Activated CD4-positive, alpha-beta T cell treated with anti-CD3 and anti-CD28 coated beads for 36 hours (primary cell): ENCODE measurements at regions of chr12 and their contacts with region 1.

Region 1: DNA sequence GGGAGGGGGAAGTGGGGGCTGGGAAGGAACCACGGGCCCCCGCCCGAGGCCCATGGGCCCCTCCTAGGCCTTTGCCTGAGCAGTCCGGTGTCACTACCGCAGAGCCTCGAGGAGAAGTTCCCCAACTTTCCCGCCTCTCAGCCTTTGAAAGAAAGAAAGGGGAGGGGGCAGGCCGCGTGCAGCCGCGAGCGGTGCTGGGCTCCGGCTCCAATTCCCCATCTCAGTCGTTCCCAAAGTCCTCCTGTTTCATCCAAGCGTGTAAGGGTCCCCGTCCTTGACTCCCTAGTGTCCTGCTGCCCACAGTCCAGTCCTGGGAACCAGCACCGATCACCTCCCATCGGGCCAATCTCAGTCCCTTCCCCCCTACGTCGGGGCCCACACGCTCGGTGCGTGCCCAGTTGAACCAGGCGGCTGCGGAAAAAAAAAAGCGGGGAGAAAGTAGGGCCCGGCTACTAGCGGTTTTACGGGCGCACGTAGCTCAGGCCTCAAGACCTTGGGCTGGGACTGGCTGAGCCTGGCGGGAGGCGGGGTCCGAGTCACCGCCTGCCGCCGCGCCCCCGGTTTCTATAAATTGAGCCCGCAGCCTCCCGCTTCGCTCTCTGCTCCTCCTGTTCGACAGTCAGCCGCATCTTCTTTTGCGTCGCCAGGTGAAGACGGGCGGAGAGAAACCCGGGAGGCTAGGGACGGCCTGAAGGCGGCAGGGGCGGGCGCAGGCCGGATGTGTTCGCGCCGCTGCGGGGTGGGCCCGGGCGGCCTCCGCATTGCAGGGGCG is at the start of gene GAPDH:
- DNase-seq: peak; percentile 95
- ATAC-seq: peak; percentile 53
- H3K4me3 Mint-ChIP-seq: peak within 1 kb of the TSS; percentile 98
- H3K27ac Mint-ChIP-seq: peak within 1 kb of the TSS; percentile 100
- H3K4me1 Mint-ChIP-seq: peaks cover 37% of the 10 kb centered on the region
- H3K27me3 Mint-ChIP-seq: no peaks in the 10 kb centered on the region
- total RNA-seq, gene GAPDH: 7,289 to 9,770 TPM

Region 2: DNA sequence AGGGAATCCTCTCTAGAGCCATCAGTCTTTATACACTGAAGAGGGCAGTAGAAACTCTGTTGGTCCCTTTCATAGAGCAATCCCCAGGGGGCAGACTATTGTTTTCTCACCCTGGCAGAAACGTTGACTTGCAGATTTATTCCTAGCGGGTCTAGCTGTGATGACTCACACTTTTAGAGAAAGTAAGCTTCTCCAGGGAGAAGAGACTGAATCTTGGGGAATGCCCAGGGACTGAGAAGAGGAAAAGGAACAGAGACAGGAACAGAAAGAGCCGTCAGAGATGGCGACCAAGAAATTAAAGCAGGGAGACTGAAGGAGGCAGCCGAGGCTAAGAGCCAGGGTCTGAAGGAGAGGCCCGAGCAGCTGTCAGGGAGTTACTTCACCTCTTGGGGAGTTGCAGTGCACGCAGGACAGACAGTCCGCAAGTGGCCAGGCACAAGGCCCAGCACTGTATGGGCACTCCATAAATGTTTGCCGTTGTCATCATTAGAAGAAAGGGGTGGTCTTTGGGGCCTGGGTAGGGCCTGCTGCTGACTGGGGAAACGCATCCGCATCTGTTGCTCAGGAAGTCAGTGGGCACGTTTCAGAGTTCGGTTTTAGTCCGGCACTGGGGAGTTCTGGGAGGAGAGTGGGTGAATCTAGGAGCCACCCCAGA is 210.6 kb before region 1 on chr12:
- CTCF ChIA-PET with region 1: interaction called, 4 read pairs
- POLR2A ChIA-PET with region 1: no interaction called
- intact Hi-C with region 1: loop called in 1 of 2 experiments (anchors 5 kb)
- DNase-seq: peak; percentile 58
- ATAC-seq: peak; percentile 81
- H3K4me3 Mint-ChIP-seq: peak overlapping the region; percentile 24
- H3K27ac Mint-ChIP-seq: peak overlapping the region; percentile 89
- H3K4me1 Mint-ChIP-seq: peaks cover 32% of the 10 kb centered on the region
- H3K27me3 Mint-ChIP-seq: no peaks in the 10 kb centered on the region

Region 3: GRCh38 chr12:6423267-6424007 is 110.7 kb before region 1 on chr12:
- CTCF ChIA-PET with region 1: interaction called, 53 read pairs
- POLR2A ChIA-PET with region 1: interaction called, 7 read pairs
- intact Hi-C with region 1: loop called (anchors 1 kb)
- DNase-seq: peak; percentile 86
- ATAC-seq: peak; percentile 62
- H3K4me3 Mint-ChIP-seq: peak overlapping the region; percentile 39
- H3K27ac Mint-ChIP-seq: peak overlapping the region; percentile 87
- H3K4me1 Mint-ChIP-seq: peaks cover 47% of the 10 kb centered on the region
- H3K27me3 Mint-ChIP-seq: no peaks in the 10 kb centered on the region

Region 4: DNA sequence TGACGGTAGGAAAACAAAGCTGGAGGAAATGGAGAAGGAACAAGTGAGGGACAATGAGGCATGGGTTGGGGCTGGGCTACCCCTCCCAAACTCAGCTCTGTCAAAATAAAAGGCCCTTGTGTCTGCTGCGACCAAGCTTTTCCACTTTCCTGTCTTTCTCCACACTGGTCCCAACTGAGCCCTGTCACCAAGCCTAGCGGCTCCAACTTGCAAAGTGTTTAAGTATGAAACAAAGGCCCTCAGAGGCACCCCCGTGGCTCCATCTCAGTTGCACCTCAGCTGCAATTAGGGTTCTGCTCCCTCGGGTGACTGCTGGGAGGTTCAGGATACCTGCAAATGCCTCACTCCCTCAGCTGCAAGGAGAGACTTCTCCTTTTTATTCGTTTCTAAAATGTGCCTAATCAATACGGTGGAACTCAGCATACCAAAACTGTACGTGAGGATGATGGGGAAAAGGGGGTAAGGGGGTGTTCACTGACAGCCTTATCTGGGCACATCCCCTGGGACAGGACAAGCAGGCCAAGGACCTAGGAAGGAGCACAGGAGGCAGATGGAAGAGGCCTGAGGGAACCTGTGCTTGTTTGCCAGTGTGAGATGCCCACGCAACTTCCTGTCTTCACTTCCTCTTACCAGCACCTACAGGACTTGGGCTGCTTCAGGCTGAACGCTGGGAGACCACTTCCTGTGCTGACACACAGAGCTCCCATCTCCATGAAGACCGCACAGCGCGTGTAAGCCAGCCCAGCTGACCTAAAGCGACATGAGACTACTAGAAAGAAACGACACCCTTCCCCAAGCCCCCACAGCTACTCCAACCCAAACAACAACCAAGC is 72.5 kb before region 1 on chr12:
- CTCF ChIA-PET with region 1: interaction called, 15 read pairs
- POLR2A ChIA-PET with region 1: interaction called, 14 read pairs
- intact Hi-C with region 1: loop called in 1 of 2 experiments (anchors 2 kb)
- DNase-seq: peak; percentile 92
- ATAC-seq: peak; percentile 81
- H3K4me3 Mint-ChIP-seq: peak overlapping the region; percentile 75
- H3K27ac Mint-ChIP-seq: peak overlapping the region; percentile 100
- H3K4me1 Mint-ChIP-seq: peaks cover 86% of the 10 kb centered on the region
- H3K27me3 Mint-ChIP-seq: no peaks in the 10 kb centered on the region

Region 5: GRCh38 chr12:6493497-6494257 is 40.4 kb before region 1 on chr12 and contains the start of gene NCAPD2:
- CTCF ChIA-PET with region 1: interaction called, 5 read pairs
- POLR2A ChIA-PET with region 1: interaction called, 19 read pairs
- intact Hi-C with region 1: loop called (anchors 1 kb)
- DNase-seq: peak; percentile 98
- ATAC-seq: peak; percentile 89
- H3K4me3 Mint-ChIP-seq: peak within 1 kb of the TSS; percentile 94
- H3K27ac Mint-ChIP-seq: peak within 1 kb of the TSS; percentile 98
- H3K4me1 Mint-ChIP-seq: peaks cover 35% of the 10 kb centered on the region
- H3K27me3 Mint-ChIP-seq: no peaks in the 10 kb centered on the region
- total RNA-seq, gene NCAPD2: 199 to 210 TPM

Region 6: GRCh38 chr12:6768990-6769389 is 234.9 kb after region 1 on chr12:
- CTCF ChIA-PET with region 1: no interaction called
- POLR2A ChIA-PET with region 1: no interaction called
- intact Hi-C with region 1: no loop called
- DNase-seq: peak; percentile 54
- ATAC-seq: no peak
- H3K4me3 Mint-ChIP-seq: peak overlapping the region; percentile 73
- H3K27ac Mint-ChIP-seq: no peak overlapping the region
- H3K4me1 Mint-ChIP-seq: peaks cover 62% of the 10 kb centered on the region
- H3K27me3 Mint-ChIP-seq: peaks cover 31% of the 10 kb centered on the region

Region 7: GRCh38 chr12:6944381-6945186 is 410.5 kb after region 1 on chr12:
- CTCF ChIA-PET with region 1: no interaction called
- POLR2A ChIA-PET with region 1: interaction called, 14 read pairs
- intact Hi-C with region 1: no loop called
- DNase-seq: peak; percentile 94
- ATAC-seq: peak; percentile 54
- H3K4me3 Mint-ChIP-seq: peak overlapping the region; percentile 81
- H3K27ac Mint-ChIP-seq: peak overlapping the region; percentile 97
- H3K4me1 Mint-ChIP-seq: peaks cover 59% of the 10 kb centered on the region
- H3K27me3 Mint-ChIP-seq: no peaks in the 10 kb centered on the region

Region 8: DNA sequence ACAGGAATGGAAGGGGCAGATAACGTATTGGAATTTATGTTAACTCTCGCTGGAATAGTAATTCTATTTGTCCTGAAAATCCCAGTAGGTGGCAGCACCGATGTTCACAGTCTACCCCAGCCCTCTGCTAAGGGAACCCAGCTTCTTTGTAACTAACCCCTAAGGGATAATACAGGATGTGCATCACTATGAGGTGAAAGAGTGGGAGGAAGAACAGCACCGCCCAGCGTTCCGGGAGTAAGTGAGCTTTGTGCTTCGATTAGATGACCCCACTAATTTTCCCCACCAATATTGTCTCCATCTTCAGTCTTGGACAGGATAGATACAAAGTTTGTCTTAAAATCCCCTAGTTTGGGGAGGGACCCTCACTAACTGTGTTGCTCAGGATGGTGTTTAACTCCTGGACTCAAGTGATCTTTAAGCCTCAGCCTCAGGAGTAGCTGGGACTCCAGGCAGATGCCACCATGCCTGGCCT is 1399.2 kb after region 1 on chr12:
- CTCF ChIA-PET with region 1: no interaction called
- POLR2A ChIA-PET with region 1: no interaction called
- intact Hi-C with region 1: loop called in 1 of 2 experiments (anchors 10 kb)
- DNase-seq: peak; percentile 85
- ATAC-seq: peak; percentile 76
- H3K4me3 Mint-ChIP-seq: no peak overlapping the region
- H3K27ac Mint-ChIP-seq: no peak overlapping the region
- H3K4me1 Mint-ChIP-seq: peaks cover 34% of the 10 kb centered on the region
- H3K27me3 Mint-ChIP-seq: no peaks in the 10 kb centered on the region